ENCODE measurements at regions of chr9 and their contacts with region 1.

Region 1: DNA sequence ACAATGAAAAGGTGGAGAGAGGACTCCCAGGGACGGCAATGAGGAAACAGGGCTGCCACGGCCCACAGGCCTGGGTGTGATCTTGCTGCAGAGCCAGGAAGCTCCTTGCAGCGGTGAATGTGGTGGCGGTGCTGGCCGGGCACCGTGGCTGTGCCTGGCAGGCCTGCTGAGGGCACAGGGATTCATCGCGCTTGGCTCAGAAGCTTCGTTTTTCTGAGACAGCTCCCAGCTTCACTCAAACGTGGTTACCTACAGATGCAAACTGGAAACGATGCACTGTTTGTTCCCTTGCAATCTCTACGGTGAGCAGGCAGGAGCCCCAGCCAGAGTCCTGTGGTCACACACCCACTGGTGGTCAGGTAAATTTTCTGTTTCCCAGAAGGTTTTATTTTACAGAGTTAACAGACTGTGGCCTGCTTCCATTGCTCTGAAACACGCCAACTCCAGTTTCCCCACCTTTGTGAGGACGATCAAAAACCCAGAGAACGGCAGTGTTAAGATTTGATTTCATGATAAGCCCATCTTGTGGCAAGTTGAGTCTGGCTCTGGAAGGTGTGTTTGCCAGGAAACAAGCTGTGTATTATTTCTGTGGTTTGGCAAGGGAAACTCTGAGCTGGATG is 183.9 kb downstream of the AUH start:
- DNase-seq: peak; percentile 69
- H3K4me3 Mint-ChIP-seq: peak overlapping the region; percentile 40
- H3K27ac Mint-ChIP-seq: peak overlapping the region; percentile 92
- H3K4me1 Mint-ChIP-seq: peaks cover 64% of the 10 kb centered on the region
- H3K27me3 Mint-ChIP-seq: no peaks in the 10 kb centered on the region

Region 2: GRCh38 chr9:90966480-90967144 is 211.2 kb before region 1 on chr9:
- CTCF ChIA-PET with region 1: no interaction called
- POLR2A ChIA-PET with region 1: no interaction called
- DNase-seq: no peak
- H3K4me3 Mint-ChIP-seq: no peak overlapping the region
- H3K27ac Mint-ChIP-seq: no peak overlapping the region
- H3K4me1 Mint-ChIP-seq: peaks cover 38% of the 10 kb centered on the region
- H3K27me3 Mint-ChIP-seq: no peaks in the 10 kb centered on the region

Region 3: DNA sequence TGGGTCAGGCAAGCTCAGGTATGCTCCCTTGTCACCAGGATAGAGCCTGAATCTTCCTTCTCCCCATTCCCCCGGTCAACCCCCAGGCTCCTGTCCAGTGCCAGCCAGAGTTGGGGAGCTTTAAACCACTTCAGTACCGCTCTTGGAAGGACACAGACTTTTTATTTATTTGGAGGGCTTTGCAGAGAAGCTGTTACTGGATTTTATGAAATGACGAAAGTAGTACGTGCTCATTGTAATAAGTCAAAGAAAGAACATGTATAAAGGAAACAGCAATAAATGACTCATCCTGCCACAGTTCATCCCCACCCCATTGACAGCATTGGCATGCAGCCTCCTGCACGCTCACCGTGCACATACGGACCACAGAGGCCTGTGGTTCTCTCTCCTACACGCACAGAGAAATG is 46.3 kb before region 1 on chr9:
- CTCF ChIA-PET with region 1: no interaction called
- POLR2A ChIA-PET with region 1: interaction called, 11 read pairs
- DNase-seq: peak; percentile 90
- H3K4me3 Mint-ChIP-seq: peak overlapping the region; percentile 62
- H3K27ac Mint-ChIP-seq: peak overlapping the region; percentile 99
- H3K4me1 Mint-ChIP-seq: peaks cover 61% of the 10 kb centered on the region
- H3K27me3 Mint-ChIP-seq: no peaks in the 10 kb centered on the region

Region 4: GRCh38 chr9:91241909-91242308 is 64.1 kb after region 1 on chr9:
- CTCF ChIA-PET with region 1: no interaction called
- POLR2A ChIA-PET with region 1: no interaction called
- DNase-seq: no peak
- H3K4me3 Mint-ChIP-seq: no peak overlapping the region
- H3K27ac Mint-ChIP-seq: no peak overlapping the region
- H3K4me1 Mint-ChIP-seq: peaks cover 23% of the 10 kb centered on the region
- H3K27me3 Mint-ChIP-seq: no peaks in the 10 kb centered on the region